AG04449 (cell line): ENCODE measurements at regions of chr11 and their contacts with region 1.

Region 1: DNA sequence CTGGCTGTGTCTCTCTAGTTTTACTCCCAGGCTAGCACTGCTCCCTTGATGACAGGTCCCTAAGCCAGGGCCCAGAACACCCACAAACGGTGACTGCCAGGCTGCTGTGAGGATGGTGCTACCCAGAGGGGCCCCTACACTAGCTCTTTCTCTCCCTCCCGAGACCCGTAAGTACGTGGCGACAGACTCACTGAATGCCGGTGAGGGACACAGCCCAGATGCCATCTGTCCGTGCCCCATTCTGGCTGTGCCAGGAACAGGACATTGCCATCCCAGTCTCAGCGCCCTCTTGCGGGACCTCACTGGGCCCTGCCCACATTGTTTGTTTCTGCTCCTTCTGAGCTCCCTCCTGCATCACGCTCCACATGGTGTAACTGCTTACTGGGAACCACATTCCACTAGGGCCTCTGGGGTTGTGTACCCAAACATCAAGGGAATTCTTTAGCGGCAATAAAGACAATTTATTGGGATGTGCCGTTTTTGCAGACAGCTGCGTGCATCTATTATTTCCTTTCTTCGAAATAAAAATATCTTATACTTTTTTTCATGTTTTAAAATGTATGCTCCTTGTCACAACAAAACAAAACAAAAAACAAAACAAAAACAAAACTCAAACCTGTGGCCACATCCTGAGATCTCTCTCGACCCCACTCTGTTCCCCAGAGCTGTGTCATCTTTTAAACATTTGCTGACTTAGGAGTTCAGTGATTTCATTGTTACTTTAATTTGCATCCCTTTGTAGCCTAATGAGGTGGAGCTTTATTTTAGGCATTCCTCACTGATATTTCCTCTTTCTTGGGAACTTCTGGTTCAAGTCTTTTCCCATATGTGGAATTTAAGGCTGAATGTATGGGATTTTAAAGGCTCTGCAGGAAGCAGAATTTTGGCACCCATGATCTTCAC is 4.4 kb upstream of the TPCN2 start:
- DNase-seq: peak; percentile 40
- H3K4me3 ChIP-seq: no peak overlapping the region
- CTCF ChIP-seq: peak; percentile 92

Region 2: GRCh38 chr11:68621826-68622225 is 422.5 kb before region 1 on chr11:
- CTCF ChIA-PET with region 1: no interaction called
- POLR2A ChIA-PET with region 1: no interaction called
- DNase-seq: no peak
- H3K4me3 ChIP-seq: no peak overlapping the region
- CTCF ChIP-seq: no peak

Region 3: DNA sequence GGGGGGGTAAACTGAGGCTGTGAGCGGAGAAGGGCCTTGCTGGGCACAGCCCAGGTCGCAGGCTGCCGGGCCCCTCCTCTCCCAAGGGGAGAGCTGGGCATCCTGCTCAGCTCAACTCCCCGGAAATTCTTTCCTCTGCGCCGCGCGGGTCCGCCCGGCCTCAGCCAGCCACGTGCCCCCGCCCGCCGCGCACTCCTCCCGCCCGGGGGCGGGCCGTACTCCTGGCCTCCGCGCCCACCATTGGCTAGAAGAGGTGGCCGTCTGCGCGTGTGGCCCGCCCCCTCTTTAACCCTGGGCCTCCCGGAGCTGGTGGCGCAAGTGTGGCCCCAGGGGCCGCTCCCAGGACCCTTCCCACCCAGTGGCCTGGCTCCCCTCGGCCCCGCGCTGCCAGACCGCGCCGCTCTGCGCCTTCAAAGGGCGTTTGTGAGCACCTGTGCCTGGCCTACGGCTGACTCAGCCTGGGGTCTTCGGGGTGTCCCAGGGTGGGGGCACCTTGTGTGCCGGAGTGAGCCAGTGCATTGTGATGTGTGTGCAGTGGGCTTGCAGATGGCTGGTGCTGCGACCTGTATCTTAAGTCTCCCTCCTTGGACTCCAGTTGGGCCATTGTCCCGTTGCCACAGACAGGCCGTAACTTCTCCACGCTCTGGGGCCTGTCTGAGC is 33.3 kb before region 1 on chr11:
- CTCF ChIA-PET with region 1: interaction called, 32 read pairs
- POLR2A ChIA-PET with region 1: interaction called, 4 read pairs
- DNase-seq: no peak
- H3K4me3 ChIP-seq: peak overlapping the region; percentile 70
- CTCF ChIP-seq: no peak

Region 4: GRCh38 chr11:69030292-69030691 is 14.1 kb before region 1 on chr11:
- CTCF ChIA-PET with region 1: interaction called, 15 read pairs
- POLR2A ChIA-PET with region 1: no interaction called
- DNase-seq: no peak
- H3K4me3 ChIP-seq: no peak overlapping the region
- CTCF ChIP-seq: no peak

Region 5: DNA sequence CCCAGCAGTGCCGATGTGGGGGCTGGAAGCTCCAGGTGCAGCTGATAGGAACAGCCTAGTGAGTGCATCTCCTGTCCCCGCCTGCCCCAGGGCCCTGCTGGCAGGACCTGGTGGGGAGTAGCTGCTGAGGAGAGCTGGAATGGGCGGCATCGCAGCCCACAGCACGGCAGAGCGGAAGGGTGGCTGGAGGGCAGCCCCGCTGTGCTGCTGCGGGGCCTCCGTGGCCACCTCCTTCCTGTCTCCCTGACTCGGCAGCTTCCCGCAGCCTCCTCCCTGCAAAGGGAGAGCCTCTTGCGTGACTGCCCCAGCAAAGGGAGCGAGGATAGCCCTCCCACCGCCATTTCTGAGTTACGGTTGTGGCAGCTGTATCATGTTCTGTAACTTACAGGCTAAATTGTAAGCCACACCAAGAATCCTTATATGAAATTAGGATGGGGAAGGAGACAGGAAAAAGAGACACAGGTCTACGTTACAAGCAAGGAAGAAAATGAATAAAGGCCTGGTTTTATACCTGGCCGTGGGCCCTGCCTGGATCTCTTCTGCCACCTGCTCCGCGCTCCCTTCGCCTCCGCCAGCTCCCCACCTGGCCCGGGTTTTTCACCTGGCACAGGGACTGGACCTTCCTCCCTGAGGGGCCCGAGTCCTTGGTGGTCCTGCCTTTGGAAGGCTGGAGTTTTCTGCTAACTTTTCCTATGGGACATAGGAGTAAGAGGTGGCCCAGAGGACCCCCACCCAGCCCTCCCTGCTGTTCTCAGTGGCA is 14.3 kb after region 1 on chr11:
- CTCF ChIA-PET with region 1: interaction called, 10 read pairs
- POLR2A ChIA-PET with region 1: no interaction called
- DNase-seq: no peak
- H3K4me3 ChIP-seq: no peak overlapping the region
- CTCF ChIP-seq: no peak